Sigmoid colon (tissue), 7 donors: ENCODE measurements at regions of chr11 and their contacts with region 1.

Region 1: GRCh38 chr11:124586238-124586860 is 16.6 kb downstream of the OR8A1 start:
- DNase-seq: no peak
- H3K4me3 ChIP-seq: no peak overlapping the region
- H3K27ac ChIP-seq: no peak overlapping the region
- H3K4me1 ChIP-seq: no peaks in the 10 kb centered on the region
- H3K27me3 ChIP-seq: no peaks in the 10 kb centered on the region
- CTCF ChIP-seq: peak in 3 of 4 experiments; percentile 17 to 45 (median 32)
- EP300 ChIP-seq: no peak
- POLR2A ChIP-seq: no peak

Region 2: GRCh38 chr11:124070915-124071635 is 515.3 kb before region 1 on chr11:
- intact Hi-C with region 1: loop called (anchors 5 kb)
- DNase-seq: peak; percentile 75
- H3K4me3 ChIP-seq: no peak overlapping the region
- H3K27ac ChIP-seq: no peak overlapping the region
- H3K4me1 ChIP-seq: peaks cover 2 to 18% (median 13%) of the 10 kb centered on the region in 4 donors
- H3K27me3 ChIP-seq: peaks cover 0 to 21% (median 11%) of the 10 kb centered on the region in 3 donors
- CTCF ChIP-seq: peak in 3 of 4 experiments; percentile 22 to 70 (median 46)
- EP300 ChIP-seq: no peak
- POLR2A ChIP-seq: no peak

Region 3: DNA sequence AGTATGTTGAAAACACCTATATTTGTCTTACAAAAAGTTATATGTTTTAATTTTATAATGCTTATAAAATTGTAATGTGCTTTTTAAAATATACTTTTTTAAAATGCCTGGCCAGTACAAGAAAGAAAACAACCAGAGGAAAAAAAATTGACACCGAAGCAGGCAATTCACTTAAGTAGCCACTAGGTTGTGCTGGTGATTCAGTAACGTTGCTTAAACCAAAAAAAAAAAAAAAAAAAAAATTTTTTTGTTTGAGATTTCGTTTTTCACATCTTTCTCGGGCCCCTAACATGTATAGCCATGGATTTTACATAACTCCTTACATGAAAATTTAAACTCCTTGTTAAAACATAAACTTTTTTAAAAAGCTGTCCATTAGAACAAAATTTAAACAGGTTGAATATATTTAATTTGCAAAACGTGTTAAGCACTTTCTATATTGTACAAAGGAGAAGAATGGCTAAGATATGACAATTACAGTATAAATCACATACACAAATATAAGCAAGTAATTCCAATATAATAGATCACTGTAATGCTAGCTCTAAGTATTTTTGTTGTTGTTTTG is 170.9 kb before region 1 on chr11:
- intact Hi-C with region 1: loop called (anchors 5 kb)
- DNase-seq: no peak
- H3K4me3 ChIP-seq: no peak overlapping the region
- H3K27ac ChIP-seq: no peak overlapping the region
- H3K4me1 ChIP-seq: no peaks in the 10 kb centered on the region
- H3K27me3 ChIP-seq: no peaks in the 10 kb centered on the region
- CTCF ChIP-seq: peak in 2 of 4 experiments; percentile 11 to 60
- EP300 ChIP-seq: no peak
- POLR2A ChIP-seq: no peak

Region 4: GRCh38 chr11:124717786-124718651 is 131.7 kb after region 1 on chr11:
- intact Hi-C with region 1: no loop called
- DNase-seq: no peak
- H3K4me3 ChIP-seq: peak overlapping the region; percentile 8 to 43 (median 38)
- H3K27ac ChIP-seq: peak overlapping the region in 1 of 4 donors; percentile 20
- H3K4me1 ChIP-seq: peaks cover 0 to 13% (median 9%) of the 10 kb centered on the region in 4 donors
- H3K27me3 ChIP-seq: peaks cover 6 to 72% (median 33%) of the 10 kb centered on the region in 3 donors
- CTCF ChIP-seq: no peak
- EP300 ChIP-seq: no peak
- POLR2A ChIP-seq: no peak